Calu3 (cell line): ENCODE measurements at regions of chr18 and their contacts with region 1.

Region 1: DNA sequence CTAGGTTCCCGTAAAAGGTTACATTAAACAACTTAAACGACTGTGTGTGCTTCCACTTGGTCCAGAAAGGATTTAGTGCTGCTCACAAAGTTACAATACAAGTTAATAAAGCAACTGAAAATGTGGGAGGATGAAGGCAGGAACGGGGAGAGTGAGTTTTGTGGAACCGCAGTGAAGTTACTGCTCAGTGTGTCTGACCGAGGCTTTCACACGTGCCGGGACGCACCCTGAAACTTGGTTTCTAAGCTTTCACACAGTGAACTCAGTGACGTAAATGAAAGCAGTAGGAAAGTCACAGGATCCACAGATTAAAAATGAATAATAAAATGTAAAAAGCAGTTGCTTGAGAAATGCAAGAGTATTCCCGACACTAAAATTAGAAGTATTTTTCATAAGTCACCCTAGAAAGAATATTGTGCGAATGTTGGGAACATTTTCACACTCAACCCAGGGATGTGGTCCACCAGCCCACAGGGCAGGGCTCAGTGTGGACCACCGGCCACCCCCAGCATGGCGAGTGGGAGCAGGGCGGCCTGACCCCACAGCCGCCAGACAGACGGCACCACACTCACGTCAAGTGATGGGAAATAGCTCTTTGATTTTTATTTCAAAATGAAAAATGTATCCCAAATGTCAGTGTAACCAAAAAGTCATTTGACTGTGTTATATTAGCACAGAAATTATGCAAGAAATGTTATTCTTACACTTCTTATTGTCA is 32.6 kb upstream of the CHMP1B start:
- DNase-seq: no peak
- H3K4me3 Mint-ChIP-seq: no peak overlapping the region
- H3K27ac Mint-ChIP-seq: no peak overlapping the region
- H3K4me1 Mint-ChIP-seq: no peaks in the 10 kb centered on the region
- H3K27me3 Mint-ChIP-seq: peaks cover 12% of the 10 kb centered on the region
- CTCF ChIP-seq: no peak

Region 2: DNA sequence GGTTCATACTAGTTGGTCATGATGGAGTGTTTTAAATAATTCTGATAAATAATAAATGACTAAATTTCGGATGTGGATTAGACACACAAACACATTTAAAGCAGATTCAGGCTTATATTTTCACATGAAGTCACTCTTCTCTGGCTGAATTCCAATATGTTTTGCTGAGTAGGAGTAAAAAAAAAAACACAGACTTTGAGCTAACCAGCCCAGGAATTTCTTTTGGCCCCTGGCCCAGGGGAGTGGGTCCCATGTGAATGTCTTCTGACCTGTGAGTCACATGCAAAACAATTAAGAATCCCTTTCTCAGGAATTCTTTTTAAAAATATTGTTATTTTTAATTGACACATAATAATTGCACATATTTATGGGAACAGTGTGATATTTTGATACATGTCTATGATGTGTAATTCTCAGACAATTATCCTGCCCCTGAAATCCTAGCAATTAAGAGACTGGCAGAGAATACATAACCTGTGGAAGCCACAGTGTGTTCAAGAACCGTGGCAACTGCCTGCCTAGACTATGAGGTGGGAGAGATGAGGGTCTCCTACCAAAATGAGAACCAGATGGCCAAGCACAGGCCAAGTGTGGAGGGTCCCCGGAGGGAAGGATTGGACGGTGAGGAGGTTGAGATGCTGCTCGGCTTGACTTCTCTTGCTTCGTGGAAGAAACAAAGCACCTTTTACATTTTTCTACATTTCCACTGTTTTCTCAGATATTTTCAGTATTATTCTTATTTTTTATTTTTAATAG is 905.7 kb before region 1 on chr18:
- CTCF ChIA-PET with region 1: no interaction called
- intact Hi-C with region 1: no loop called
- DNase-seq: peak; percentile 21
- H3K4me3 Mint-ChIP-seq: no peak overlapping the region
- H3K27ac Mint-ChIP-seq: peak overlapping the region; percentile 52
- H3K4me1 Mint-ChIP-seq: no peaks in the 10 kb centered on the region
- H3K27me3 Mint-ChIP-seq: no peaks in the 10 kb centered on the region
- CTCF ChIP-seq: no peak

Region 3: DNA sequence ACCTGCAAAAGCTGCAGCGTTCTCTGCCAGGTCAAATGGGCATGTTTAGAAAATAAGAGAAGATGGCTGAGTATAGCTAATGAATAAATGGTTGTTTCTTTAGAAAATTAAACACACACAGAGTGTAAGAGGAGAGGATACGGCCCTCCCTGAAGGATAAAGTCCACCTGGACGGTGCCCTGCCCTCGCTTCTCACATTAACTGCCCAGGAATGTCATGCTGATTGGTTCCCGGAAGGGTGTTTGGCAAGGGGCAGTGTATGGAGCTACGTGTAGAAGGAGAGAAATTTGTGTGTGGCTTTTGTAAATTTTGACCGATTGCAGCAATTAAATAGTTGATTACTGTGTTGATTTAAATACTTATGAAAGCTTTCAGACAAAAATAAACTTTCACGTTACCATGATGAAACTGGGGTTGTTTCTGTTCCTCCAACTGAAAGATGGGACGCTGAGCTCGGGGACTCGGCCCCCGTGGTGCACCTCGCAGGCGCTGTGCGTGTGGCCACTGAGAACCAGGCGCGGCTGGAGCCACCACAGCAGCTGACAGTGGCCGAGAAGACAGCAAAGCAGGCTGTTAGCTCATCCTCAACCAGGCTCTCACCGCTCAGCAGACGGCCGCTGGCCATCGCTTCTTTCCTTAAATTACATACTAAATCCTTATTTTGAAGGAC is 66.8 kb after region 1 on chr18:
- CTCF ChIA-PET with region 1: interaction called, 14 read pairs
- intact Hi-C with region 1: no loop called
- DNase-seq: peak; percentile 35
- H3K4me3 Mint-ChIP-seq: no peak overlapping the region
- H3K27ac Mint-ChIP-seq: no peak overlapping the region
- H3K4me1 Mint-ChIP-seq: peaks cover 29% of the 10 kb centered on the region
- H3K27me3 Mint-ChIP-seq: peaks cover 13% of the 10 kb centered on the region
- CTCF ChIP-seq: no peak

Region 4: DNA sequence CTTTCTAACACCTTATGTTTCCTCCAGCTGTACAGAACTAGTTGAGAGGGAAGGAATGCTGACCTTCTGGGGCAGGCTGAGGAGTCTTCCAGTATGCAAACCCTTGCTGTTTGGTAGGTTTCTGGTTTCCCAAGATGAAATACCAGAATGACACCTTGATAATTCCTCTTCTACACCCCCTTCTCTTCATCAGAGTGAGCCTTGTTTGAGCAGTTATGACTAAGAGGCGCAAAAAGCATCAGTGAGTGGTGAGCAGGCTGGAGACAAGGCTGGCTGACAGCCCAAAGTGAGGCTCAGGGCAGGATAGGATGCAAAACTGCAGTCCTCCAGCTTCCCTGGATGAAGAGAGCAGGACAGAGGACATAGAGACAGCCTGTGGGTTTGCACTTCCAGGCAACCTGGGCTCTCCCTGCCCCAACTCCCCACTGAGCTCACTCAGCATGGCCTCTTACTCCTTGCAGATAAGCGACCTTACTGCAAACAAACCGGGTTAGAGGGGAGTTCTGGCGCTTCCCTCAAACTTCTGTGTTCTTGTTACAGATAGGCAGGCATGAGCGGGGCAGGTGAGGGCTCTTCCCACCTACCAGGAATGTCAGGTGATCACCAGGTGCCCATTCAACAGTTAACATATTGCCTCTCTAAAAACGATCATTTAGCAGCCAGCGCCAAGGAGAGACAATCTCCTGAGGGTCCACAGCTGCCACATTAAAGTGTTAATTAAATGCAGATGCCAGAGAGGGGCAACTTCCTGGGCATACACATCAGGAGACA is 84.1 kb after region 1 on chr18:
- CTCF ChIA-PET with region 1: no interaction called
- intact Hi-C with region 1: no loop called
- DNase-seq: no peak
- H3K4me3 Mint-ChIP-seq: no peak overlapping the region
- H3K27ac Mint-ChIP-seq: no peak overlapping the region
- H3K4me1 Mint-ChIP-seq: peaks cover 16% of the 10 kb centered on the region
- H3K27me3 Mint-ChIP-seq: no peaks in the 10 kb centered on the region
- CTCF ChIP-seq: no peak